OCI-LY7 (cell line): ENCODE measurements at regions of chr3 and their contacts with region 1.

Region 1: DNA sequence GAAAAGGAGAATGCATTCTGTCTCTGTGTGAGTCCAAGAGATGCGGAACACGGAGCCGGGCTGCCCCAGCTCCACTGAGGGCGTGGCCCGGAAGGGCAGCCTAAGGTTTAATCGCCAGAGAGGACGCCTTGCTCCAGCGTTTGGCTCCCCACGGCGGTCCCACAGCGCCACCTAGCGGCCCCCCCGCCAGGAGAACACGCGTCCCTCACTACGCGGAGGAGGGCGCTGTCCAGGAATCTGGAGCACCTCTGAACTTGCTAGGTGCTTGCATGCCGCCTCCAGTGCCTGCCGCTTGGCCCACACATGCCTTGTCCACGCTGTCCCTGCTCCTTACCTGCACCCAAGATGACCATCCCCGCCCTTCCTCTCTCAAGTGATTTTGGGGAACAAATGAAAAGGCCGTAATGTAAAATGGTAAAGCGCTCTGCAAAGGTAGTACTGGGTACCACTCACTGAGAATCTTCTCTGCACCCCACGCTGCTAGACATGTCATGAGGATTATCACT is 14.4 kb upstream of the MRPS22 start:
- DNase-seq: peak; percentile 72
- H3K4me3 ChIP-seq: no peak overlapping the region
- H3K27ac ChIP-seq: no peak overlapping the region
- H3K4me1 ChIP-seq: no peaks in the 10 kb centered on the region
- CTCF ChIP-seq: peak; percentile 93

Region 2: GRCh38 chr3:138479438-138479863 is 849.9 kb before region 1 on chr3:
- CTCF ChIA-PET with region 1: no interaction called
- POLR2A ChIA-PET with region 1: no interaction called
- intact Hi-C with region 1: loop called (anchors 1 kb)
- DNase-seq: peak; percentile 70
- H3K4me3 ChIP-seq: no peak overlapping the region
- H3K27ac ChIP-seq: no peak overlapping the region
- H3K4me1 ChIP-seq: no peaks in the 10 kb centered on the region
- CTCF ChIP-seq: peak; percentile 89

Region 3: GRCh38 chr3:138935848-138936740 is 393.3 kb before region 1 on chr3:
- CTCF ChIA-PET with region 1: no interaction called
- POLR2A ChIA-PET with region 1: no interaction called
- intact Hi-C with region 1: loop called (anchors 1 kb)
- DNase-seq: peak; percentile 31
- H3K4me3 ChIP-seq: peak overlapping the region; percentile 59
- H3K27ac ChIP-seq: no peak overlapping the region
- H3K4me1 ChIP-seq: peaks cover 6% of the 10 kb centered on the region
- CTCF ChIP-seq: peak; percentile 74

Region 4: GRCh38 chr3:138941259-138941885 is 388.0 kb before region 1 on chr3:
- CTCF ChIA-PET with region 1: no interaction called
- POLR2A ChIA-PET with region 1: no interaction called
- intact Hi-C with region 1: loop called (anchors 1 kb)
- DNase-seq: peak; percentile 27
- H3K4me3 ChIP-seq: no peak overlapping the region
- H3K27ac ChIP-seq: no peak overlapping the region
- H3K4me1 ChIP-seq: no peaks in the 10 kb centered on the region
- CTCF ChIP-seq: peak; percentile 75

Region 5: GRCh38 chr3:139111392-139112229 is 217.8 kb before region 1 on chr3:
- CTCF ChIA-PET with region 1: no interaction called
- POLR2A ChIA-PET with region 1: no interaction called
- intact Hi-C with region 1: loop called (anchors 2 kb)
- DNase-seq: peak; percentile 39
- H3K4me3 ChIP-seq: no peak overlapping the region
- H3K27ac ChIP-seq: no peak overlapping the region
- H3K4me1 ChIP-seq: no peaks in the 10 kb centered on the region
- CTCF ChIP-seq: peak; percentile 82

Region 6: DNA sequence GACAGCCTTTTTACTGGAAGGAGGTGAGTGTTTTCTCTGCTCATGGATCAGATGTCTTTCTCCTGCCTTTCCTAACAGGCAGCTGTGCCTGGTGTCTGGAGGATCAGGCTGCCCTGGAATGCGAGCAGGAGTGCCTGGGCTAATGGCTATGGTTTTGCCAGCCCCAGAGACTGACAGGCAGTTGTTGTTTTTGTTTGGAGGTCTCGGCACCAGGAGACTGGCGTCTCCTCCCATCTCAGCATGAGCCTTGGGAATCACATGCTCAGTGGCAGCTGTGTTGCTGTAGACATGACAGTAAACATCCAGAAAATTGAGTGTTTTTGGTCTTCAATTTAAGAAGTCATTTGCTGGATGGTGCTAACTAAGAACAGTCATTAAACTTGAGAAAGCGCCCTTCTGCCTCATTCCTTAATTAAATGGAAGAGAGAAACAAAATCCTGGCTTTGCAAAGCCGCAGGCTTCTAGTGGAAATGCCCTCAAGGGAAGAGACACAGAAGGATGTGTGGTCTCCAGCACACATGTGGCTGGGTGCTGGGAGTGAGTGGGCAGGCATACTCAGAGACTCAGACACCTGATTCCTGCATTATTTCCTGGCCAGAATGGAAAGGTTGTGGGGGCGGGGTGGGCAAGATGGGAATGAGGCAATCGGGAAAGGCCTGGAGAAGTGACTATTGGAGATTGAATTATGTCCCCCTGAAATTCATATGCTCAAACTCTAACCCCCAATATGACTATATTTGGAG is 445.3 kb after region 1 on chr3:
- CTCF ChIA-PET with region 1: no interaction called
- POLR2A ChIA-PET with region 1: no interaction called
- intact Hi-C with region 1: no loop called
- DNase-seq: no peak
- H3K4me3 ChIP-seq: no peak overlapping the region
- H3K27ac ChIP-seq: no peak overlapping the region
- H3K4me1 ChIP-seq: no peaks in the 10 kb centered on the region
- CTCF ChIP-seq: no peak